ENCODE measurements at regions of chr7 and their contacts with region 1.

Region 1: GRCh38 chr7:133434055-133434865 is 181.4 kb downstream of the EXOC4 start:
- DNase-seq: peak; percentile 30
- ATAC-seq: peak; percentile 54
- H3K4me3 ChIP-seq: no peak overlapping the region
- H3K27ac ChIP-seq: no peak overlapping the region
- H3K4me1 ChIP-seq: no peaks in the 10 kb centered on the region
- H3K27me3 ChIP-seq: no peaks in the 10 kb centered on the region
- CTCF ChIP-seq: peak; percentile 60; the same call in 1 of the 2 replicates

Region 2: GRCh38 chr7:132930881-132931280 is 503.4 kb before region 1 on chr7:
- CTCF ChIA-PET with region 1: no interaction called
- POLR2A ChIA-PET with region 1: no interaction called
- intact Hi-C with region 1: loop called (anchors 10 kb)
- DNase-seq: peak; percentile 17
- ATAC-seq: peak; percentile 38; the same call in 1 of the 2 replicates
- H3K4me3 ChIP-seq: no peak overlapping the region
- H3K27ac ChIP-seq: no peak overlapping the region
- H3K4me1 ChIP-seq: no peaks in the 10 kb centered on the region
- H3K27me3 ChIP-seq: no peaks in the 10 kb centered on the region
- CTCF ChIP-seq: peak; percentile 60

Region 3: GRCh38 chr7:133081599-133082389 is 352.5 kb before region 1 on chr7 and contains the start of gene CHCHD3:
- CTCF ChIA-PET with region 1: no interaction called
- POLR2A ChIA-PET with region 1: no interaction called
- intact Hi-C with region 1: loop called (anchors 1 kb)
- DNase-seq: peak; percentile 96
- ATAC-seq: peak; percentile 100
- H3K4me3 ChIP-seq: peak within 1 kb of the TSS; percentile 89
- H3K27ac ChIP-seq: peak within 1 kb of the TSS; percentile 43; the same call in 1 of the 2 replicates
- H3K4me1 ChIP-seq: no peaks in the 10 kb centered on the region
- H3K27me3 ChIP-seq: peaks cover 13% of the 10 kb centered on the region; the same call in 1 of the 2 replicates
- CTCF ChIP-seq: no peak
- total RNA-seq, gene CHCHD3: 139 and 149 TPM in 2 replicates

Region 4: DNA sequence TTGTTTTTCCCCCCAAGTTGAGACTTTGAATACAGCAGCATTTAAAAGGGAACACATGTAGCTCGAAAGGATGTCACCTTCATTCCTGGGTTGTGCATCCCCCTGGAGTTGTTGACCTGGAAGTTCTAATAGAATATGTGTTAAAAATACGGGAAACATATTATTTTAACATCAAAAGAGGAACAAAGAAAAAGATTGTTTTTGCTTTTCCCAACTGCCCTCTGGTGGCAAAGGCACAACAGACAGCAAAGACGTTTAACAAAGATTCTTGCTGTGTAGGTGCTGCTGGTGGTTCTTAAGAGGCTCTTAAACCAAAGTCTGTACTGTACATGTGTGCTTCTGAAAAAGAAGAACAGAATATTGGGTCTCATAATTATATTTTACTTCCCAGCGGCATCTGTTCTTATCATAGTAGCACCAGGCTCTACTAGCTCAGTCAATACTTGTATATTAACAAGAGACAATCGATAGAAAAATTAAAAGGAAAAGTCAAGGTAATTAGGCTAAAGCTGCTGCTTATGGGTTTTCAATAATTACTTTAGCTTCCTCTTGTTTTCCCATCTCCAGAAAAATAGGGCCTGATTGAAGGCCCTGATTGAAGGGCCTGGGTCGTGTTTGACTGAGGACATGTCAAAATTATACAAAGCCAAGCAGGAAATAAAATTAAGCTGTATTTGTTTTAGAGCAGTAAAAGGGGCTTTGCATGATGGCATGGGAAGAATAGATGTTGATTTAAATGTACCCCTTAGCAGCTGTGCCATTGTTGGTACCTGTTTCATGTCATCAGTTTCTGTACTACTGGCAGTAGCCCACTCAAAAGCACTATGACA is 308.7 kb after region 1 on chr7:
- CTCF ChIA-PET with region 1: no interaction called
- POLR2A ChIA-PET with region 1: no interaction called
- intact Hi-C with region 1: loop called (anchors 10 kb)
- DNase-seq: peak; percentile 42
- ATAC-seq: peak; percentile 44; the same call in 1 of the 2 replicates
- H3K4me3 ChIP-seq: no peak overlapping the region
- H3K27ac ChIP-seq: no peak overlapping the region
- H3K4me1 ChIP-seq: peaks cover 5% of the 10 kb centered on the region; the same call in 1 of the 2 replicates
- H3K27me3 ChIP-seq: no peaks in the 10 kb centered on the region
- CTCF ChIP-seq: peak; percentile 77

Region 5: DNA sequence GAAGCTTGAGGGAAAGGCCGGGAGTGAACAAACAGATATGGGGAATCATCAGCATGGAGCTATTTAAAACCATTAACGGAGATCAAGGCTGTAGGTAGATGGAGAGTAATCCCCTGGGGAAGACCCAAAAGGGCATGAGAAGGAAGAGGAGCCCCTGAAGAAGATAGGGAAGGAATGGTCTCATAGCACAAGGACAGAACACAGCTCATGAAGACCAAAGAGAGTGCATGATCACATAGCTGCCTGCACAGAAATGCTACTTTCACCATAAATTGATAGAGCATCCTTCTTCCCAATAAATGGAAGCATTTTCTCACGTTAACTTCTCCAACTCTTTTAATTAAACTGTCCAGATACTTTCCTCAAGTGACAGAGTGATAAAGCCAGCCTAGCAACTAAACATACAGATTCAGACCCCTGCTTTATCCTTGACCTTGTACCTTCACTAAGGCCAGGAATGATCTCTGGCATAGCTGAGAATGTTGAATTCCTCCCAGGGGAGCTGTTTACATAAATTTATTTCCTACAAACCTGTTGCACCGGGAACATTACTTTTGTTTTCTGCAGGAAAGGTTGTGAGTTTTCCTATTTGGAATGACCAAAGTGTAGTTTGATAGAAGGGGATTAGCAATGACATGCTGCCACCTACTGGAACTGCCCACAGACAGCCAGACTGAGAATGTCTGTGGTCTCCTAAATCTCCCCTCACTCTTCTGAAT is 582.1 kb after region 1 on chr7:
- CTCF ChIA-PET with region 1: no interaction called
- POLR2A ChIA-PET with region 1: no interaction called
- intact Hi-C with region 1: loop called (anchors 1 kb)
- DNase-seq: peak; percentile 49
- ATAC-seq: peak; percentile 74
- H3K4me3 ChIP-seq: no peak overlapping the region
- H3K27ac ChIP-seq: no peak overlapping the region
- H3K4me1 ChIP-seq: no peaks in the 10 kb centered on the region
- H3K27me3 ChIP-seq: no peaks in the 10 kb centered on the region
- CTCF ChIP-seq: peak; percentile 87